HCT116 (cell line): ENCODE measurements at regions of chr5 and their contacts with region 1.

Region 1: GRCh38 chr5:12636209-12636608 is 732.0 kb upstream of the CTNND2 start:
- DNase-seq: no peak
- ATAC-seq: no peak
- H3K4me3 ChIP-seq: no peak overlapping the region
- H3K27ac ChIP-seq: no peak overlapping the region
- H3K4me1 ChIP-seq: no peaks in the 10 kb centered on the region
- H3K27me3 ChIP-seq: no peaks in the 10 kb centered on the region
- CTCF ChIP-seq: no peak
- POLR2A ChIP-seq: no peak
- RAD21 ChIP-seq: no peak

Region 2: GRCh38 chr5:12683249-12683648 is 47.0 kb after region 1 on chr5:
- CTCF ChIA-PET with region 1: no interaction called
- POLR2A ChIA-PET with region 1: no interaction called
- RAD21 ChIA-PET with region 1: no interaction called
- intact Hi-C with region 1: loop called (anchors 2 kb)
- DNase-seq: no peak
- ATAC-seq: no peak
- H3K4me3 ChIP-seq: no peak overlapping the region
- H3K27ac ChIP-seq: no peak overlapping the region
- H3K4me1 ChIP-seq: no peaks in the 10 kb centered on the region
- H3K27me3 ChIP-seq: no peaks in the 10 kb centered on the region
- CTCF ChIP-seq: no peak
- POLR2A ChIP-seq: no peak
- RAD21 ChIP-seq: no peak